Gastrocnemius medialis (tissue), 4 donors: ENCODE measurements at regions of chr5 and their contacts with region 1.

Region 1: GRCh38 chr5:71586941-71587765 is at the start of gene MCCC2:
- DNase-seq: peak; percentile 93 to 96
- ATAC-seq: peak; percentile 96 to 99
- H3K4me3 ChIP-seq: peak within 1 kb of the TSS; percentile 68 to 92 (median 76)
- H3K27ac ChIP-seq: peak within 1 kb of the TSS; percentile 80 to 87 (median 85)
- H3K4me1 ChIP-seq: peaks cover 13 to 21% of the 10 kb centered on the region in 2 donors
- H3K27me3 ChIP-seq: no peaks in the 10 kb centered on the region
- CTCF ChIP-seq: no peak
- POLR2A ChIP-seq: peak; percentile 60 to 84
- total RNA-seq, gene MCCC2: 41.4 to 51.4 (median 46.9) TPM

Region 2: GRCh38 chr5:72307968-72308852 is 721.1 kb after region 1 on chr5:
- in situ Hi-C with region 1: loop called in 1 of 4 experiments (anchors 10 kb)
- intact Hi-C with region 1: no loop called
- DNase-seq: peak; percentile 98
- ATAC-seq: peak; percentile 97
- H3K4me3 ChIP-seq: peak overlapping the region; percentile 63 to 86 (median 81)
- H3K27ac ChIP-seq: peak overlapping the region; percentile 91 to 97 (median 94)
- H3K4me1 ChIP-seq: peaks cover 7 to 8% of the 10 kb centered on the region in 2 donors
- H3K27me3 ChIP-seq: no peaks in the 10 kb centered on the region
- CTCF ChIP-seq: peak; percentile 86 to 93 (median 87)
- POLR2A ChIP-seq: peak; percentile 83 to 95